IMR-90 (cell line): ENCODE measurements at regions of chr2 and their contacts with region 1.

Region 1: DNA sequence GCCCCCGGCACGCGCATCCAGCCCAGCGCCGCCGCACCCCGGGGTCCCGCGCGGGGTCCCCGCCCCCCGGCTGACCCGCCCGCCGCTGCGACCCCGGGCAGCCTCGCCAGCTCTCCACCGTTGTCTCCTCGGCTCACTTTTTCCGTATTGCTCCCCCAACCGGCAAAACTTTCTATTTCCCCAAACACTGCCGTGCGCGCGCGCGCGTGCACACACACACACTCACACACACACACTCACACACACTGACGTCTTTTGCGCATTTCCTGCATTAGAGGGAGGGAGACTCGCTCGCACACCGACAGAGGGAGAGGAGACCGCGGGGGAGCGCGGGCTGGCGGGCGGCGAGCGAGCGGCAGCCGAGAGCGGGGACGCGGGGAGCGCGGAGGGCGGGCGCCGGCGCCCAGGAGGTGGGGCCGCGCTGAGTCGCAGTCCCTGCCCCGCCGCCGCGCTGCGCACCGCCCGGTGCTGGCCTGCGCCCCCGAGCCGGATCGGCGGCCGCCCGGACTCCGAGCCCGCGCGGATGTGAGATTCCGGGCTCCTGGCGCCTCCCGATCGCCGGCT is 542 bp upstream of the PRKCE start:
- DNase-seq: peak; percentile 98
- ATAC-seq: peak; percentile 84
- H3K4me3 ChIP-seq: peak overlapping the region; percentile 49
- H3K27ac ChIP-seq: peak overlapping the region; percentile 83
- H3K4me1 ChIP-seq: peaks cover 4% of the 10 kb centered on the region
- H3K27me3 ChIP-seq: no peaks in the 10 kb centered on the region
- CTCF ChIP-seq: peak; percentile 58
- POLR2A ChIP-seq: peak; percentile 86
- RAD21 ChIP-seq: peak; percentile 47

Region 2: DNA sequence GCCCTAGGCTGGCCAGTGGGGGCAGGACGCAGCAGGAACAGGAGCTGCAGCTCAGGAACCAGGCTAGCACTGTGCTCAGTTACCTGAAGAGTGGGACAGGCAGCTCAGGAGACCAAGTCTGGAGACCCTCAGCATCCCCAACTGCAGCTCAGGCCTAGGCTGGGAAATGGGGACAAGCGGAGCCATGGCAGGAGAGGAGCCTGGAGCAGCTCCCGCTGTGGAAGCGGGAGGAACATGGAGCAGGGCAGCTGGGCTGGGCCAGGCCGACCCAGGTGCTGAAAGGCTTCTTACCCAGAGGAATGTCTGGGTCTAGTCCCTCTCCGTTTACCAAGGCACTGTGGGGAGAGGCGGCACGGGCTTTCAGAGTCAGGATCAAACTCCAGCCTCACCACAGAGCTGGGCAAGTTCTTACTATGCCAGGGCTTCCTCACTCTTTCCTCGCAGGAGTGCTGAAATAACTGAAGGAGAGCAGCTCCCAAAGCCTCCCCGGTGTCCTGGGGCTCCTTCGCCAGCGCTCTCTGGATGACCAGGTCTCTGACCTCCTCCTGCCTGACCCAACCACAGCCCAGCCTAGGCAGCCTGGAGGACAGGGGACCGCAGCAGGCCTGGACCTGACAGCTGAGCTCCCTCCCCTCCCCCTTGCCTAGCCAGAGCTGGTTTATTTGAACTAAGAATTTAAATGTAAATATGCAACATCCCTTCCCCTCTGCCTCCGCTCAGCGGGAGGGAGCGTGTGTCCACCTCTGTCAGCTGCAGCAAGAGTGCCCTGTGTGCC is 393.9 kb before region 1 on chr2:
- CTCF ChIA-PET with region 1: no interaction called
- POLR2A ChIA-PET with region 1: no interaction called
- dilution Hi-C with region 1: no loop called
- in situ Hi-C with region 1: no loop called
- intact Hi-C with region 1: no loop called
- DNase-seq: peak; percentile 64
- ATAC-seq: peak; percentile 87
- H3K4me3 ChIP-seq: no peak overlapping the region
- H3K27ac ChIP-seq: peak overlapping the region; percentile 9; the same call in 1 of the 2 replicates
- H3K4me1 ChIP-seq: peaks cover 16% of the 10 kb centered on the region
- H3K27me3 ChIP-seq: peaks cover 28% of the 10 kb centered on the region
- CTCF ChIP-seq: no peak
- POLR2A ChIP-seq: no peak
- RAD21 ChIP-seq: no peak

Region 3: GRCh38 chr2:45759310-45759851 is 108.4 kb after region 1 on chr2:
- CTCF ChIA-PET with region 1: no interaction called
- POLR2A ChIA-PET with region 1: no interaction called
- dilution Hi-C with region 1: no loop called
- in situ Hi-C with region 1: no loop called
- intact Hi-C with region 1: loop called (anchors 5 kb)
- DNase-seq: peak; percentile 87
- ATAC-seq: peak; percentile 85
- H3K4me3 ChIP-seq: peak overlapping the region; percentile 10; the same call in 1 of the 2 replicates
- H3K27ac ChIP-seq: peak overlapping the region; percentile 22; the same call in 1 of the 2 replicates
- H3K4me1 ChIP-seq: peaks cover 17% of the 10 kb centered on the region
- H3K27me3 ChIP-seq: no peaks in the 10 kb centered on the region
- CTCF ChIP-seq: no peak
- POLR2A ChIP-seq: no peak
- RAD21 ChIP-seq: no peak; the same call in 1 of the 2 replicates

Region 4: GRCh38 chr2:45778720-45779171 is 127.8 kb after region 1 on chr2:
- CTCF ChIA-PET with region 1: interaction called, 4 read pairs
- POLR2A ChIA-PET with region 1: no interaction called
- dilution Hi-C with region 1: no loop called
- in situ Hi-C with region 1: loop called (anchors 5 kb)
- intact Hi-C with region 1: loop called (anchors 2 kb)
- DNase-seq: peak; percentile 63
- ATAC-seq: peak; percentile 72
- H3K4me3 ChIP-seq: no peak overlapping the region
- H3K27ac ChIP-seq: no peak overlapping the region
- H3K4me1 ChIP-seq: no peaks in the 10 kb centered on the region; the same call in 1 of the 2 replicates
- H3K27me3 ChIP-seq: no peaks in the 10 kb centered on the region
- CTCF ChIP-seq: peak; percentile 62
- POLR2A ChIP-seq: no peak
- RAD21 ChIP-seq: peak; percentile 78